Adrenal gland (tissue), 19 donors: ENCODE measurements at regions of chr2 and their contacts with region 1.

Region 1: DNA sequence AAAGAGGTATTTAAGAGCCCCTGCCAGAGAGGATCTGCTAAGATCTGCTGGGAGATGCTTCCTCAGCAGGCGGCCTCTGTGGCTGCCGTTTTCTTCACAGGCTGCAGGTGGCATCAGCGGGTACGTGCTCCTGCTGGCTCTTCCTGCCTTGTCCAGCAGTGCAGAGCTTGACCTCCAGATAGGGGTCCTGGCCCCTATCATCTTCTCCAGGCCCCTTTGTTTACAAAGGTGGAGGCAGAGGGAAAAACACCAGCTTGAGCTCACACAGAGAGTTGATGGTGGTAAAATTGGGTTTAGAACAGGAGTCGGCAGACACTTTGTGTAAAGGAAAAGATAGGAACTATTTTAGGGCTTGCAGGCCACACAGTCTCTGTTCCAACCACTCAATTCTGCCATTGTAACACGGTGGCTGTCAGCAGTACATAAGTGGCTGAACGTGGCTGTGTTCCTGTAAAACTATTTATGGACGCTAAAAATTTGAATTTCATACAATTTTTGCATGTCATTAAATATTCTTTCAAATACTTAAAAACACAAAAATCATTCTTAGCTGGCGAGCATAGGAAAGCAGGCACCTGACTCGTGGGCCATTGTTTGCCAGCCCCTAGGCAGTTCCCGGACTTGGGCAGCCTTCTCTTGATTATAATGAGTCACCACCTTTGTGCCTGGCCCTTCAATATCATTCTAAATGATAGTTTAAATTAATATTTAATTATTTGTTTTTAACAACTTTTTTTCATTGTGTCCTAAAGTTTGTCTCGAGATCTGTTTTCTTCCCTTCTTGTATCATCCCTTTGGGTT is 98.2 kb upstream of the B3GNT7 start:
- DNase-seq: peak; percentile 45 to 84 (median 70)
- H3K4me3 ChIP-seq: no peak overlapping the region
- H3K27ac ChIP-seq: peak overlapping the region in 1 of 5 donors; percentile 56
- H3K4me1 ChIP-seq: peaks cover 0 to 6% of the 10 kb centered on the region in 2 donors
- H3K27me3 ChIP-seq: no peaks in the 10 kb centered on the region
- CTCF ChIP-seq: peak; percentile 40 to 77 (median 72)
- POLR2A ChIP-seq: no peak

Region 2: DNA sequence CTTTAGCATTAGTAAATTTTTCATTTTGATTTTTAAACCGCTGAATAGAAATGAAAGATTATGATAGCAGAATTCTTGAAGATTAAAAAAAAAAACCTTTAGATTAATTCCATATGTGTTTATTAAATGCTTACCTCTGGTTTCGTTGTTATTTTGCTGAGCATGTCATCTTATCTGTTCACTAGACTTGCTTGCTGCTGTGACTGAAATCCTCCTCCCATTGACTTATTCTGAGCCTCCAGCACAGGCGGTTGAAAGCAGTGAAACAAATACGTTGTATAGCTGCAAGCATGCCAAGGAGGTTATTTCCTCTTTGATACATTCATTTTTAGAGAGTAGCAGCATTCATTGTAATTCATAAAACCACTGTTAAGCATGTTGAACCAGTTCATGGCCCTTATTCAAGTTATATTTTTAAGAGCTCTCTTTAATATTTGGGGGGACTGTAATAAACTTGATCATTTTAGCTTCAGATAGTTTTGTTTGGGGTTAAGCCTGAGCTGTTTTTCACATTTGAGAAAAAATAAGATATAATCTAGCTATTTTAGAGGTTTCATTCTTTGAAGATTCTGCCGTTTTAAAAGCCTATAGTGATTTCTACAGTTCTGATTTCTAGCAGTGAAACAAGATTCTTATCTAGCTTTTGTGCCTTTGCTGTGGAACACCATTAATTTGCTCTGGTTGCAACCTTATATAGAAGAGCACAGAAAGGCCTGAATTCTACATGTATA is 172.3 kb before region 1 on chr2 and contains the start of gene HTR2B:
- intact Hi-C with region 1: no loop called
- DNase-seq: peak in 5 of 7 donors; percentile 43 to 68 (median 56)
- H3K4me3 ChIP-seq: peak within 1 kb of the TSS in 2 of 4 donors; percentile 14 to 50
- H3K27ac ChIP-seq: peak within 1 kb of the TSS; percentile 22 to 87 (median 73)
- H3K4me1 ChIP-seq: peaks cover 0 to 55% of the 10 kb centered on the region in 2 donors
- H3K27me3 ChIP-seq: no peaks in the 10 kb centered on the region
- CTCF ChIP-seq: no peak
- POLR2A ChIP-seq: peak in 1 of 2 donors; percentile 78
- total RNA-seq, gene HTR2B: 1.2 to 90.0 (median 49.7) TPM

Region 3: GRCh38 chr2:231227309-231228162 is 69.8 kb before region 1 on chr2:
- intact Hi-C with region 1: loop called in 1 of 2 experiments (anchors 10 kb)
- DNase-seq: peak; percentile 75 to 91 (median 79)
- H3K4me3 ChIP-seq: no peak overlapping the region
- H3K27ac ChIP-seq: peak overlapping the region in 3 of 5 donors; percentile 49 to 65 (median 63)
- H3K4me1 ChIP-seq: peaks cover 0 to 3% of the 10 kb centered on the region in 2 donors
- H3K27me3 ChIP-seq: no peaks in the 10 kb centered on the region
- CTCF ChIP-seq: peak; percentile 57 to 95 (median 87)
- POLR2A ChIP-seq: no peak

Region 4: DNA sequence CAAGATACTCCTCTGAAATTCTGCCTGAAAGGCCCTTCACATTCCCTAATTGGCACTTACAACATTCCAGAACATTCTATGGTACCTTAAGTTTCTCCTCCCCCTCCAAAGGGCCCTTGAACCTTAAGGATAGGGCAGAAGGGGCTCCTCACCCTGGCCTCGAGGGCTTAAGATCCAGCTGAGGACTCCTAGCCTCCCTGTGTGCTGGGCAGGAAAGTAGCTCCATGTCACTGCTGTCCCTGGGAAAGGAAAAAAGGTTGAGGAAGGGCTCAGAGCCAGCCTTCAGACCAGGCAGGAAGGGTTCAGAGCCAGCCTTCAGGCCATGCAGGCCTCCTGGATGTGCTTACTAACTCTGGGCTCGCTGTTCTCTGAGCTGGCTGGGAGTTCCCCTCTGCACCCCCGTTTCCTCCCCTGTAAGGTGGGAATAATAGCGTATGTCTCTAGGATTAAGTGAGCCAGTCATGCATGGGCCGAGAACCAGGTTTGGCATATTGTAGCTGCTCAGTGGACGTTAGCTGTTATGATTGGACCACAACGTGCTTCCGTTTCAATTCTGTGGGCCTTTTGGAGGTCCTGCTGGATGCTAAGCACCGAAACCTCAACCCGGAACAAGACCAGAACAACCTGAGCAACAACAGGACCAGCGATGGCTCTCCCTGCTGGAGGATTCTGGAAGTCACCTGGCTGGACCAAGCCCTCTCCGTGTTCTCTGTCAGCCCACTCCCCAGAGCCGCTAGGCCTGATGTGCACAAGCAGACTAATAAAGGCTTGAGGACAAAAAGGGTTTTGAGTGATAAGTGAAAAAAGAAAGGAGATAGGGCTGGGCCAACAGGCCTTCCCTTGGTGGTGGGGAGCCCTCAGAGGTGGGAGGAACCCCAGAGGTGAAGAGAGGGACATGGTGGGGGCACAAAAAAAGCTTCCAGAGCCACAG is 97.2 kb after region 1 on chr2:
- intact Hi-C with region 1: loop called in 1 of 2 experiments (anchors 10 kb)
- DNase-seq: peak in 2 of 7 donors; percentile 10 to 21
- H3K4me3 ChIP-seq: peak overlapping the region in 1 of 4 donors; percentile 94
- H3K27ac ChIP-seq: peak overlapping the region in 2 of 5 donors; percentile 59 to 79
- H3K4me1 ChIP-seq: peaks cover 20 to 25% of the 10 kb centered on the region in 2 donors
- H3K27me3 ChIP-seq: no peaks in the 10 kb centered on the region
- CTCF ChIP-seq: peak in 2 of 6 experiments; percentile 14 to 18
- POLR2A ChIP-seq: no peak

Region 5: DNA sequence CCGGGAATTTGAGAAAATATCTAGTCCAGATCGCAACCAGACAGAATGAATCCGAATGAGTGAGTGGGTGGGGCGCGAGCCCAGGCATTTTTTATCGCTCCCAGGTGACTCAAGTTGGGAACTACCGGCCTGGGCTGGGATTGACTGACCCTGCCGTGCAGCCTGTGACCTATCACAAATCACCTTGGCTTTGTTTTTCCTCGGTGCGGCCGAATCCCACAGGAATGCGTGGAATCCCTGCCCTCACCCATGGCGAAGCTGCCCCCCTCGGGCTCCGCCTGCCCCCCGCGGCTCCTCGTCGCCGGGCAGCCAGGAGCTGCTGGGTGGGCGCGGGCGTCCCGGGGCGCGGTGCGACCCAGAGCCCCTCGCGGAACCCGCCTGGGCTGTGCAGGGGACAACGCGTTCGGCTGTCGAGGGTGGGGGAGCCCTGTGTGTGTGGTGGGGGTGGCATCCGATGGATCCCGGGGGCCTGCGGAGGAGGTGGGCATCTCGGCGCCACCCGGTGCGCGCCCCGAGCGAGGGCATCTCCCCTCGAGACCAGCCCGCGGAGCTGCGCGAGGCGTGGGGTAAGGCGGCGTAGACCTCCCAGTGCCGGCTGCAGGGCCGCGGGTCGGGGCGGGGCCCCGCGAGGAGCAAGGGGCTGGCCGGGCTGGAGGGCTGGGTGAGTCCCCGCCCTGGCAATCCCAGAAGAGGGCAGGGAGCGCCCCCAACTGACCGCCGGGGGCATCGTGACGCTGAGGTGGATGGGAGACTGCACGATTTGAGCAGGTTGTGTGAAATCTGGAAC is 114.7 kb after region 1 on chr2:
- intact Hi-C with region 1: loop called in 1 of 2 experiments (anchors 5 kb)
- DNase-seq: peak; percentile 89 to 96 (median 93)
- H3K4me3 ChIP-seq: peak overlapping the region in 3 of 4 donors; percentile 39 to 79 (median 44)
- H3K27ac ChIP-seq: peak overlapping the region in 4 of 5 donors; percentile 46 to 92 (median 74)
- H3K4me1 ChIP-seq: peaks cover 6 to 17% of the 10 kb centered on the region in 2 donors
- H3K27me3 ChIP-seq: no peaks in the 10 kb centered on the region
- CTCF ChIP-seq: peak; percentile 81 to 92 (median 85)
- POLR2A ChIP-seq: no peak